CD4-positive, alpha-beta memory T cell (primary cell): ENCODE measurements at regions of chr4 and their contacts with region 1.

Region 1: GRCh38 chr4:81351654-81352445 is 119.9 kb downstream of the RASGEF1B start:
- DNase-seq: peak in 4 of 5 donors; percentile 38 to 55 (median 42)
- H3K4me3 ChIP-seq: no peak overlapping the region
- H3K4me3 Mint-ChIP-seq: no peak overlapping the region
- H3K27ac ChIP-seq: no peak overlapping the region
- H3K27ac Mint-ChIP-seq: no peak overlapping the region
- H3K4me1 ChIP-seq: no peaks in the 10 kb centered on the region
- H3K4me1 Mint-ChIP-seq: peaks cover 0 to 2% (median 0%) of the 10 kb centered on the region in 4 donors
- H3K27me3 ChIP-seq: no peaks in the 10 kb centered on the region
- H3K27me3 Mint-ChIP-seq: peaks cover 6 to 8% of the 10 kb centered on the region in 2 donors

Region 2: GRCh38 chr4:81335122-81335912 is 16.5 kb before region 1 on chr4:
- CTCF ChIA-PET with region 1: interaction called, 10 read pairs
- POLR2A ChIA-PET with region 1: no interaction called
- intact Hi-C with region 1: no loop called
- DNase-seq: no peak
- H3K4me3 ChIP-seq: no peak overlapping the region
- H3K4me3 Mint-ChIP-seq: no peak overlapping the region
- H3K27ac ChIP-seq: no peak overlapping the region
- H3K27ac Mint-ChIP-seq: no peak overlapping the region
- H3K4me1 ChIP-seq: no peaks in the 10 kb centered on the region
- H3K4me1 Mint-ChIP-seq: no peaks in the 10 kb centered on the region
- H3K27me3 ChIP-seq: no peaks in the 10 kb centered on the region
- H3K27me3 Mint-ChIP-seq: no peaks in the 10 kb centered on the region

Region 3: DNA sequence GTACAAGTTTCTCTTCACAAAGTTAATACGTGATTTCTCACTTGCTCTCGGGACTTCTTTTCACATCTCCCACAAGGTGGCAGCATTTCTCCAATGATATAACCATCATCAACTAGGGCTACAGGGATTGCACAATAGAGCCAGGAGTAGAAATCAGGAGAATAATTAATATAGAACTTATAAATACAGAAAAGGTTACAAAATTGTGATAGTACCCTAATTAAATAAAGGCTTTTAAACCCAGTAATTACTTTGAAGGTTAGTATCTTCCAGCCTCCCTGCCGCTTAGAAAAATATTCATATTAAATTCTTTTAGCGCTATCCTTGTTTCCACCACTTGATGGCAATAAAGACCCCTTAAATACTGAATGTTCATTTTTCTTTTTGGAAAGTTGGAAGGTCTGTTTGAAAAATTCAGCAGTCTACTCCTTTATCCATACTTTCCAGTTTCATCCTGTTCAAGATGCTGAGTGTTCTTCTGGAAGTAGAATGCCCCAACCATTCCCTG is 54.1 kb after region 1 on chr4:
- CTCF ChIA-PET with region 1: no interaction called
- POLR2A ChIA-PET with region 1: no interaction called
- intact Hi-C with region 1: no loop called
- DNase-seq: peak; percentile 46 to 74 (median 70)
- H3K4me3 ChIP-seq: no peak overlapping the region
- H3K4me3 Mint-ChIP-seq: peak overlapping the region in 3 of 8 donors; percentile 0 to 52 (median 35)
- H3K27ac ChIP-seq: no peak overlapping the region
- H3K27ac Mint-ChIP-seq: no peak overlapping the region
- H3K4me1 ChIP-seq: peaks cover 6% of the 10 kb centered on the region
- H3K4me1 Mint-ChIP-seq: peaks cover 0 to 3% (median 1%) of the 10 kb centered on the region in 4 donors
- H3K27me3 ChIP-seq: no peaks in the 10 kb centered on the region
- H3K27me3 Mint-ChIP-seq: peaks cover 1 to 2% of the 10 kb centered on the region in 2 donors